PC-3 (cell line): ENCODE measurements at regions of chr2 and their contacts with region 1.

Region 1: DNA sequence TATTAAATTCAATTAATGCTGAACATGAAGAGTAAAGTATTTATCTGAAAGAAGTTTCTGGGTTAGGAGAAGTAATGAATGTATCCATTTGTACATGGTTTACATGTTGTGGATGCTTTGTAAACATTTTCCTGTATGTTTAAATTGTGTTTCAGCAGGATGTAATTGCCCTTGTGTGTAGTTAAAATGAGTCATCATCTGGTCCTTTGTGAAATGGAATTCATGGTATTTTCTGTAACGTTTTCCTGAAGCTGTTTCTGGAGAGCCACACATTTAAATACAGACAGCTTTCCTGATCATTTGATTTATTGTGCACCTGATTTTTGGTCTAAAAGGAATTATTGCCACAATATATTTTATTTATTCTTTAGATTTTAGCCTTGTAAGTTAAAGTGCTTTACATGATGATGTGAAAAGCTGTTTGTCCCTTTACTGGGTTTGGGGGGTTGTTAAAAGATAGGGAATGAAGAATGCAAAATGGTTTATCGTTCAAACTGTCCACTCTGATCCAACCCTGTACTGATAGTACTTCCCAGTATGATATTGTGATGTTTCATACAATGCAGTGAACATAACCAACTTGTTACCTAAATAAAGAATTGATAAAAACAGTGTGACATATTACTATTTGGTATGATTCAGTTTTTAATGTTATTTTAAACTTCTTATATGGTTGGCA is 41.7 kb upstream of the SLC3A1 start:
- DNase-seq: peak; percentile 79
- ATAC-seq: peak; percentile 87
- H3K4me3 ChIP-seq: no peak overlapping the region
- H3K27ac ChIP-seq: no peak overlapping the region
- H3K4me1 ChIP-seq: peaks cover 23% of the 10 kb centered on the region
- H3K27me3 ChIP-seq: no peaks in the 10 kb centered on the region
- CTCF ChIP-seq: no peak

Region 2: GRCh38 chr2:44191739-44192138 is 41.9 kb before region 1 on chr2:
- CTCF ChIA-PET with region 1: no interaction called
- POLR2A ChIA-PET with region 1: no interaction called
- intact Hi-C with region 1: loop called (anchors 5 kb)
- DNase-seq: no peak
- ATAC-seq: no peak
- H3K4me3 ChIP-seq: no peak overlapping the region
- H3K27ac ChIP-seq: no peak overlapping the region
- H3K4me1 ChIP-seq: no peaks in the 10 kb centered on the region
- H3K27me3 ChIP-seq: no peaks in the 10 kb centered on the region
- CTCF ChIP-seq: no peak